ENCODE measurements at regions of chr1 and their contacts with region 1.

Region 1: DNA sequence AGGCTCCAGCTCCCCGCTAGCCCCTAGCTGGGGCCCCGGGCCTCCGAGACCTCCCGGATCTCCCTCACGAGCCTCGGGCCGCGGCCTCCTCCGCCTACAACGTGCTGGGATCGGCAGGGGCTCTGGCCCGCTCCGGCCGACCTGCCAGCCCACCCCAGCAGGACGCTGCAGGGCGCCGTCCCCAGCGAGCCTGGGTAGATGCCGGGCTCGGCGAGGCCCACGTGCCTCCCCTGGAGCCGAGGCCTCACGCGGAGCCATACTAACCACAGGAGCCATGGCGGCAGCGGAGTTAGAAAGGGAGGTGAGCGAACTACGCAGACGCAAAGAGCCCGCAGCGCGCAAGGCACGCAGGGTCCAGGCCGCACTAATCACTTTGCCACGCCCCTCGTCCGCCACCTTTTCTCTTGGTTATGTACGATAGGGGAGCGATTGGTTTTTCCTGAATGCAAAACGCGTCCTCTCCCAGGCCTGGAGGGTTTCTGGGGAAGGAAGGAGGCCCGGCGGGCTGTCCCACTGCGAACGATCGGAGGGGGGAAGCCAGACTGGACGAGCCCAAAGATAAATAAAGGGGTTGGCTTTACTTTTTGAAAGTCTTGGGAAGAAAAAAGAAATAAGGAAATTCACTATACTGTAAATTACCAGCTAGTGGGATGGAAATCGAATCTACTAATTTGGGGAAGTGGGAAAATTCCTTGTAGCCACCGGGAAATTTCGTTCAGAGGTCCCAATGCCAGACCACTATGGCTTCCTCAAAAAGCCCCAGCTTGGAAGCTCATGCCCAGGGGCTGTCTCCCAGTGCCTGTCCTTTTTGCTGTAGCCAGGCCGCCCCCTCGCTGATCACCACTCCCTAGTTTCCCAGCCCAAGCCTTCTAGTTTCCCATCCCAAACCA is at the start of gene RPL22:
- DNase-seq: peak; percentile 96 to 99
- ATAC-seq: peak; percentile 96 to 99 (median 98)
- H3K4me3 ChIP-seq: peak within 1 kb of the TSS; percentile 72 to 100 (median 90)
- H3K27ac ChIP-seq: peak within 1 kb of the TSS; percentile 3 to 92 (median 88)
- H3K4me1 ChIP-seq: peaks cover 0 to 37% (median 32%) of the 10 kb centered on the region in 9 donors
- H3K27me3 ChIP-seq: no peaks in the 10 kb centered on the region
- CTCF ChIP-seq: no peak
- total RNA-seq, gene RPL22: 223 to 298 (median 273) TPM

Region 2: GRCh38 chr1:6235296-6235677 is 35.7 kb after region 1 on chr1:
- intact Hi-C with region 1: loop called in 5 of 10 experiments (anchors 5 kb)
- DNase-seq: no peak
- ATAC-seq: peak in 1 of 8 donors; percentile 3
- H3K4me3 ChIP-seq: peak overlapping the region; percentile 50 to 96 (median 82)
- H3K27ac ChIP-seq: peak overlapping the region; percentile 27 to 87 (median 74)
- H3K4me1 ChIP-seq: peaks cover 8 to 45% (median 34%) of the 10 kb centered on the region in 9 donors
- H3K27me3 ChIP-seq: peaks cover under 1 to 21% (median 11%) of the 10 kb centered on the region in 7 donors
- CTCF ChIP-seq: no peak

Measured in heart right ventricle (tissue), 16 donors.